ENCODE measurements at regions of chr17 and their contacts with region 1.

Region 1: DNA sequence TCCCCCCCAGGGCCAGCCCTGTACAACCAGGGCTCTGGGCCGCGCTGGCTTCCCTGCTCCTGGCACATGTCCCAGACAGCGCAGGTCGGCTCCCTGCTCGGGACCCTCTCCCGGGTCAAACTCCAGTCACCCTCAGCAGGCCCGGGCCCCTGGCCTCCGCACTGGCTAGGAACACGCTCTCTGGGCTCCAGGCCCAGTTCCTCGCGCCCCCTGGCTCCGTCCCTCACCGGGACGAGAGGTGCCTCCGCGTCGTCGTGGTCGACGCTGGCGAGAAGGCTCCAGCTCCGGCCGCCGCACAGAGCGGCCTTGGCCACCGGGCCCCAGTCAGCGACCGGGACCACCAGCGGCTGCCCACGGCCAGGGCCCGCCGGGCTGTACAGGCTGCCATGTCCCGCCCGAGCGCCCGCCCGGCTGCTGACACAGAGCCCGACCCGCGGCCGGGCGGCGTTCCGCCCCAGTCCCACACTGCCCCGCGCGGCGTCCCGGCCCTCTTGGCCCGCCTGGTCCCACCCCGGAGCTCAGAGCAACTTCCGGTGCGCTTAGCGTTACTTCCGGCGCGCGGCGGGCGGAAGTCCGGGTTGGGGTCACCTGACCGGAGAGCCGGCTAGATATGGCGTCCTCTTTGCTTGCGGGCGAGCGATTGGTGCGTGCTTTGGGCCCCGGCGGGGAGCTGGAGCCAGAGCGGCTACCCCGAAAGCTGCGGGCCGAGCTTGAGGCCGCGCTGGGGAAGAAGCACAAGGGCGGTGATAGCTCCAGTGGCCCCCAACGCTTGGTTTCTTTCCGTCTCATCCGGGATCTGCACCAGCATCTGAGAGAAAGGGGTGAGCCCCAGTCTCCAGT is at the start of gene POLDIP2:
- DNase-seq: peak; percentile 93 to 96
- ATAC-seq: peak; percentile 98 to 100
- H3K4me3 ChIP-seq: peak within 1 kb of the TSS; percentile 84
- H3K27ac ChIP-seq: peak within 1 kb of the TSS; percentile 93 to 96
- H3K4me1 ChIP-seq: peaks cover 16% of the 10 kb centered on the region
- CTCF ChIP-seq: no peak
- EP300 ChIP-seq: peak in 1 of 2 experiments; percentile 30; a peak in 1 of 5 replicates
- POLR2A ChIP-seq: peak; percentile 93
- RAD21 ChIP-seq: peak in 1 of 2 experiments; percentile 51; a peak in 3 of 5 replicates
- polyA plus RNA-seq, gene POLDIP2: 132 and 162 TPM in 2 replicates

Region 2: DNA sequence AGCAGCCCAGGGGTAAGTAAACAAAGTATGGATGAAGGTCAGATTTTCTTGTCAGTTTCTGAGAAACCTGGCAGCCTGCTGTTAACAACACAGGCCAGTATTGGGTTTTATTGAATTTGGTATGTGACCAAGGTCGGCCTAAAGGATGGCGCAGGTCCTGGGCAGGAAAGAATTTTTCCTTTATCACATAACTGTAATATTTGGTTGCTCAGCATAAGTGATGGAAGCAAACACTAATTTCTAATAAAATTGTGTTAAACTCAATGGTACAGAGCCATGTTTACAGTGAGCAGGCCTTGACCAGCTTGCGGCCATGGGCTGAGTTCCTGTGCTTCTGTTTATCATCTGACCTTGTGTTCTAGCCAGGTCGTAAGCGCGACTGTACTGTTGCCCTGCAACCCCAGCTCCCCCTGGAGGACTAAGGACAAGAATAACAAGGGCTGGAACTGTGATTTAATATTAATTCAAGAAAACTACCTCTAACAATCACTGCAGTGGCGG is 10.5 kb before region 1 on chr17:
- CTCF ChIA-PET with region 1: interaction called, 35 read pairs
- POLR2A ChIA-PET with region 1: interaction called, 26 read pairs
- DNase-seq: peak in 1 of 2 experiments; percentile 48
- ATAC-seq: peak in 1 of 2 experiments; percentile 30; a peak in 2 of 6 replicates
- H3K4me3 ChIP-seq: no peak overlapping the region
- H3K27ac ChIP-seq: no peak overlapping the region
- H3K4me1 ChIP-seq: no peaks in the 10 kb centered on the region
- CTCF ChIP-seq: peak; percentile 10; the same call in 1 of the 3 replicates
- EP300 ChIP-seq: no peak
- POLR2A ChIP-seq: no peak
- RAD21 ChIP-seq: peak; percentile 27 to 37; a peak in 2 of 5 replicates

Region 3: DNA sequence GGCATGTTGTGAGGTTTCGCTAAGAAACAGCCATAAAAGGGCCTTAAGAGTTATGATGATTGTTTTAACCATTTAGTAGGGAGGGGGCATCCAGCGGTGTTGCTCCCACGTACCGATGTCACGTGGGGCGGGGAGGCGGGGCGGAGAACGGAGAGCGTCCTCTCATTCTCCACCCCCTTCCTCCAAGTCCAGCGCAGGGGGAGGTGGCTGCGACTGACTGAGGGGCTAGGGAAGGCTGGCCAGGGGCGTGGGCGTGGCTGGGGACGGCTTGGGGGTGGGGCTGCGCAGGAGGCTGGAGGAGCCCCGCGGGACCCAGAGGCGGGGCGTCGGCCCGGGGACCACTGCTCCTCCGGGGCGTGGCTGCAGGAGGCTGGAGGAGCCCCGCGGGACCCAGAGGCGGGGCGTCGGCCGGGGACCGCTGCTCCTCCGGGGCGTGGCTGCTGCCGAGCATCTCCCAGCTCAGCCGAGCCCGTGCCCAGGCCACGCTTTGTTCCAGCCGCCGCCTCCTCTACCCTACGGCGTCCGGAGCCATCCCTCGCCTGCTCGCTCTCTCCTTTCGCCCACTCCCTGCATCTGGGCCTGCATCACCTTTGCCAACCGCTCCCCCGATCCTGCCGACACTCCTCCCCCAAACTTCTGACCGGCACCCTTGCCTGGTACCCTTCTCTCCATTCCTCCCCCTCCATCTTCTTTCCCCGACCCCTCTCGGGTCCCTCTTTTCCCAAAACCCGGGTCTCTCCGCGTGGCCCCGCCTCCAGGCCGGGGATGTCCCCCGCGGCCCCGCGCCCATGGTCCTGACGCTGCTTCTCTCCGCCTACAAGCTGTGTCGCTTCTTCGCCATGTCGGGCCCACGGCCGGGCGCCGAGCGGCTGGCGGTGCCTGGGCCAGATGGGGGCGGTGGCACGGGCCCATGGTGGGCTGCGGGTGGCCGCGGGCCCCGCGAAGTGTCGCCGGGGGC is 14.2 kb after region 1 on chr17 and contains the start of gene SARM1:
- CTCF ChIA-PET with region 1: interaction called, 27 read pairs
- POLR2A ChIA-PET with region 1: interaction called, 43 read pairs
- DNase-seq: peak; percentile 94 to 95
- ATAC-seq: peak; percentile 71 to 90
- H3K4me3 ChIP-seq: peak within 1 kb of the TSS; percentile 57
- H3K27ac ChIP-seq: peak within 1 kb of the TSS; percentile 83 to 87
- H3K4me1 ChIP-seq: peaks cover 30% of the 10 kb centered on the region
- CTCF ChIP-seq: no peak
- EP300 ChIP-seq: no peak
- POLR2A ChIP-seq: peak; percentile 38
- RAD21 ChIP-seq: no peak
- polyA plus RNA-seq, gene SARM1: 4.0 and 4.8 TPM in 2 replicates